ENCODE measurements at regions of chr5 and their contacts with region 1.

Region 1: DNA sequence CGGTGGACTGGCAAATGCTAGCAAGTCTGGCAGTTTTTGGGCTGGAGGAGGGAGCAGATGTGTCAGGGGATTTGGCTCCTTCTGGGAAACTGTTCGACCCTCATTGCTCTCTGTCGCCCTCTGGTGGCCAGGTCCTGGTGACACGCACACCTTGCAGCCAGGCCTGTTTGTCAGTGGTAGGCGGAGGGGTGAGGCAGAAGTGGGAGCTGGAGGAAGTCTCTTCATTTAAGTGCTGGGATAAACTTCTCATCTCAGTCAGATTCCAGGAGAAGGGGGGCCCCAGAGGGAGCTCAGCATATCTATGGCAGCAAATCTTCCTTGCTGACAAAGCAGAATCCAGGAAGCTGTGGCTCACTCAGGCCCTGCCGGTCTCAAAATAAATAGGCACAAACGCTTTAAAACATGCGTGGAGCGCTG is 326.5 kb downstream of the ZSWIM6 start:
- DNase-seq: peak; percentile 44
- ATAC-seq: peak; percentile 96
- H3K4me3 ChIP-seq: no peak overlapping the region
- H3K27ac ChIP-seq: no peak overlapping the region
- H3K4me1 ChIP-seq: no peaks in the 10 kb centered on the region
- H3K27me3 ChIP-seq: peaks cover 2 to 29% of the 10 kb centered on the region in 2 experiments; a peak in 2 of 5 replicates
- CTCF ChIP-seq: peak; percentile 91
- EP300 ChIP-seq: no peak
- POLR2A ChIP-seq: no peak
- RAD21 ChIP-seq: no peak

Region 2: DNA sequence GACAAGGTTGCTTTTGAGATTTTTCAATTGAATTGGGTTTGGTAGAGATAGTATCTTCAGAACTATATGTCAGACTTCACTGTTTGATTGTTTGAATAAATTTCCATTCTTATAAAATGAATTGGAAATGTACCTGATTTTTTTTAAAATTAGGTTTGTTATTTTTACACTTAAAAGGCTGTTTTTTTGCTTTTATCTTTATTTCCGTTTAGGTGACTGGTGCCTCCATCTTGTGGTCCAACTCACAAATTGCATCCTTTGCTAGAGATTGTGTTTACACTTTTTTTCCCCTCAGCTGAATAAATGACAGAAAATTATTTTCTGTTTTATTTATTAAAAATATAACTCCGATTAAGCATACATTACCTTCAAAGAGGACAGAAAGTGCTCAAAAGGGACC is 698.0 kb before region 1 on chr5:
- CTCF ChIA-PET with region 1: interaction called, 5 read pairs
- POLR2A ChIA-PET with region 1: no interaction called
- in situ Hi-C with region 1: no loop called
- intact Hi-C with region 1: loop called (anchors 10 kb)
- DNase-seq: no peak
- ATAC-seq: no peak
- H3K4me3 ChIP-seq: no peak overlapping the region
- H3K27ac ChIP-seq: no peak overlapping the region
- H3K4me1 ChIP-seq: no peaks in the 10 kb centered on the region
- H3K27me3 ChIP-seq: no peaks in the 10 kb centered on the region
- CTCF ChIP-seq: 0 out of 2 replicates have a peak, but pooled peaks have one; percentile 18
- EP300 ChIP-seq: no peak
- POLR2A ChIP-seq: no peak
- RAD21 ChIP-seq: no peak

Region 3: GRCh38 chr5:61055434-61056006 is 603.1 kb before region 1 on chr5:
- CTCF ChIA-PET with region 1: interaction called, 15 read pairs
- POLR2A ChIA-PET with region 1: no interaction called
- in situ Hi-C with region 1: loop called (anchors 25 kb)
- intact Hi-C with region 1: loop called (anchors 1 kb)
- DNase-seq: peak; percentile 28
- ATAC-seq: peak; percentile 45; the same call in 1 of the 3 replicates
- H3K4me3 ChIP-seq: no peak overlapping the region
- H3K27ac ChIP-seq: no peak overlapping the region
- H3K4me1 ChIP-seq: peaks cover 7% of the 10 kb centered on the region; the same call in 1 of the 2 replicates
- H3K27me3 ChIP-seq: no peaks in the 10 kb centered on the region
- CTCF ChIP-seq: peak; percentile 71
- EP300 ChIP-seq: no peak
- POLR2A ChIP-seq: no peak
- RAD21 ChIP-seq: peak; percentile 44

Region 4: GRCh38 chr5:61724102-61724501 is 65.5 kb after region 1 on chr5:
- CTCF ChIA-PET with region 1: no interaction called
- POLR2A ChIA-PET with region 1: no interaction called
- in situ Hi-C with region 1: no loop called
- intact Hi-C with region 1: no loop called
- DNase-seq: no peak
- ATAC-seq: no peak
- H3K4me3 ChIP-seq: no peak overlapping the region
- H3K27ac ChIP-seq: no peak overlapping the region
- H3K4me1 ChIP-seq: no peaks in the 10 kb centered on the region
- H3K27me3 ChIP-seq: peaks cover 0 to 2% of the 10 kb centered on the region in 2 experiments; a peak in 1 of 5 replicates
- CTCF ChIP-seq: no peak
- EP300 ChIP-seq: no peak
- POLR2A ChIP-seq: no peak
- RAD21 ChIP-seq: no peak

Measured in HepG2 (cell line).